Activated B cell treated with CpG ODN at 0.5 μM for 24 hours (primary cell): ENCODE measurements at regions of chr10 and their contacts with region 1.

Region 1: GRCh38 chr10:91190876-91191583 is 29.4 kb upstream of the PCGF5 start:
- DNase-seq: no peak
- ATAC-seq: peak; percentile 67
- H3K4me3 Mint-ChIP-seq: peak overlapping the region; percentile 55
- H3K27ac Mint-ChIP-seq: peak overlapping the region; percentile 87
- H3K4me1 Mint-ChIP-seq: peaks cover 73% of the 10 kb centered on the region
- H3K27me3 Mint-ChIP-seq: no peaks in the 10 kb centered on the region
- CTCF ChIP-seq: no peak

Region 2: GRCh38 chr10:91172348-91172747 is 18.7 kb before region 1 on chr10:
- CTCF ChIA-PET with region 1: no interaction called
- POLR2A ChIA-PET with region 1: interaction called, 3 read pairs
- intact Hi-C with region 1: loop called (anchors 2 kb)
- DNase-seq: no peak
- ATAC-seq: no peak
- H3K4me3 Mint-ChIP-seq: no peak overlapping the region
- H3K27ac Mint-ChIP-seq: no peak overlapping the region
- H3K4me1 Mint-ChIP-seq: peaks cover 44% of the 10 kb centered on the region
- H3K27me3 Mint-ChIP-seq: no peaks in the 10 kb centered on the region
- CTCF ChIP-seq: no peak

Region 3: DNA sequence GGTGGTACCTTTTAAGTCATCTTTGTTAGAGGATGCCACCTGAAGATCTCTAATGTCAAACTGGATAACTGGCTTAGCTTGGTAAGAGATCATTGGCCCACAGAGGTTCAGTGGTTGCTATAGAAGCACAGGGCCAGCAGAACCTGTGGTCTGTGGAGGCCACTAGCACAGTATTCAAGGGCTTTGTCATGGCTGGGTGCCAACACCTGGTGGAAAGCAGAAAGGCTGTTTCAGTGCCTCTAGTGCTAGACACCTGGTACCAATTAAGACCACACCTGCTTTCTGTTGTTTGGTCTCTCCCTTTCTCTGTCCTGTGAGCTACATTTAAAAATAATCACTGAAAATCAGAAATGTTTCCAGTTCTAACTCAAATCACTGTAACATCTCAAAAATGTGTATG is 19.4 kb after region 1 on chr10:
- CTCF ChIA-PET with region 1: no interaction called
- POLR2A ChIA-PET with region 1: no interaction called
- intact Hi-C with region 1: loop called (anchors 2 kb)
- DNase-seq: no peak
- ATAC-seq: peak; percentile 70
- H3K4me3 Mint-ChIP-seq: peak overlapping the region; percentile 44
- H3K27ac Mint-ChIP-seq: peak overlapping the region; percentile 77
- H3K4me1 Mint-ChIP-seq: peaks cover 79% of the 10 kb centered on the region
- H3K27me3 Mint-ChIP-seq: no peaks in the 10 kb centered on the region
- CTCF ChIP-seq: no peak